Activated CD4-positive, alpha-beta T cell treated with anti-CD3 and anti-CD28 coated beads for 36 hours (primary cell): ENCODE measurements at regions of chr6 and their contacts with region 1.

Region 1: DNA sequence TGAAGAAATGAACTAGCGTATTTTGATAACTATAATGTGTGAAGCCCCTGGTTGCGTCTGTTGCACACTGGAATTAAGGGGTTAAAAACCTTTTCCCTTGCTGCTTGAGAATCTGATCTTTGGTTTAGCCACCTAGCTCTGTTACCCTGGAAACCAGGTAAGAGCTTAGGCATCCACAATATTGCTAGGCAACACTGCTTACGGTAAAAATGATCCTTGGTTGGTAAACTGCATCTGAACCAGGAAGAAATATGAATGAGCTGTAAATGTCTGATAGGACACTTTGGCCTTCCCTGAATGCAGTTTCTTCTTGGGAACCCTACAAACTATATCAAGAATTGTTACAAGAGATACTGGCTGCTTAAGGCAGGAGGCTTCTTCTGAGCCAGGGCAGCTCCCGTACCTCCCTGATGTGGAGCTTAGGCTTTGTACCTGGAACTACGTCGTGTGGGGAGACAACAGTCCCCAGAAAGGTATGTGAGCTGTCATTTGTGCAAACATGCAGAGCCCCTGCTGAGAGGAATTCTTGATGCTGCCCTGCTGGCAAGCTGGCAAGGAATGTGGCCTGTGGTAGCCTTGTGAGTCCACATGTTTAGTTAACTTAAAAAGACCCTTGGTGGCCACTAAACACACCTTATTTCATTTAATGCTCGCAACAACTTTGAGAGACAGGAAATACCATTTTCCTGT is 18.4 kb downstream of the UBE3D start:
- DNase-seq: no peak
- ATAC-seq: no peak
- H3K4me3 Mint-ChIP-seq: no peak overlapping the region
- H3K27ac Mint-ChIP-seq: no peak overlapping the region
- H3K4me1 Mint-ChIP-seq: no peaks in the 10 kb centered on the region
- H3K27me3 Mint-ChIP-seq: no peaks in the 10 kb centered on the region

Region 2: DNA sequence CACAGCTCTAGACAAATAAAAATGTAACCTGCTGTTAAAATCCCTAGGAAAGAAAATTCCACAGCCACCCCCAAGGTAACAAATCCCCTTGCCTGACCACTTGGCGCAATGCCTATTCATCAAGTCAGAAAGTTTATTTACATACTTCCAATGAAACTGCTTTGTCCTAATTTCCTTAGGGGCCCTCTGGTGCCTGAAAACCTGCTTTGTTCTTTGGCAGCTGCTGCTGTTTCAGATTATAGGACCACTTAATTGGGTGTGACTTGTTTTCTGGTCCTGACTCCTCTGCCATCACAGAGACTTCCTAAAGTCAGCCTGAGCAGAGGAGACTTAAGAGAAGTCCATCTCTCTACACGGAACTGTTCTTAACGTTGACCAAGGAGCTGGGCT is 305.2 kb before region 1 on chr6:
- CTCF ChIA-PET with region 1: no interaction called
- POLR2A ChIA-PET with region 1: no interaction called
- intact Hi-C with region 1: loop called in 1 of 2 experiments (anchors 10 kb)
- DNase-seq: no peak
- ATAC-seq: no peak
- H3K4me3 Mint-ChIP-seq: no peak overlapping the region
- H3K27ac Mint-ChIP-seq: no peak overlapping the region
- H3K4me1 Mint-ChIP-seq: no peaks in the 10 kb centered on the region
- H3K27me3 Mint-ChIP-seq: no peaks in the 10 kb centered on the region

Region 3: DNA sequence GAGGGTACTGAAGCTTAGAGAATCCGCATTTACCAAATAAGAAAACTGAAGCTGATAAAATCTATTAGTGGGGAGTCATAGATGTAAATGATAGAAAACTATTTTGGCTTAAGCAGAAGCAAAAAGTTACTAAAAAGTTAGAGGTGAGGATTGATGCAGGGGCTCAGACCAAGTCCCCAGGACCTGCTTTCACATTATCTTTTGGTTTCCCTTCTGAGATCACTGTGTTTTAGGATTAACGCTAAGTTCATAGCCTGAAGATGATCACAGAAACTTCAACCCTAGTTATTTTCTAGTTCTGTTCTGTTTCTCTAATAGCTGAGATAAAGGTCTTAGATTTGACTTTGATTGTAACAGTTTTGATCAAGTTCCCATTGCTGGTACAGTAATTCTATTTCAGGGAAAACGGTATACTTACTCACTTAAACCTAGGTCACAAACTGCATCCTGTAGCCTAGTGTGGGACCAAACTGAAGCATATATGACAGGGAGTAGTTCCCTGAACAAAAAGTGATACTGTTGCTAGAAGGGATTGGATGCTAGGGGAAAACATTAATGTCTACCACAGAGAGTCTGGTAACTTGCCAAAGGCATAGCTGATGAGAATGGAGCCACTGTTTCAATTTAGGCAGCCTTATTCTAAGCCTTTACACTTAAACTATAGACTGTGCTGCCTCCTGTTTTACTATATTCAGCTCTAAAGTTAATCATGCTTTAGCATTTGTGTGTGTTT is 825.3 kb after region 1 on chr6:
- CTCF ChIA-PET with region 1: no interaction called
- POLR2A ChIA-PET with region 1: no interaction called
- intact Hi-C with region 1: no loop called
- DNase-seq: no peak
- ATAC-seq: peak; percentile 64
- H3K4me3 Mint-ChIP-seq: no peak overlapping the region
- H3K27ac Mint-ChIP-seq: no peak overlapping the region
- H3K4me1 Mint-ChIP-seq: peaks cover 25% of the 10 kb centered on the region
- H3K27me3 Mint-ChIP-seq: no peaks in the 10 kb centered on the region

Region 4: DNA sequence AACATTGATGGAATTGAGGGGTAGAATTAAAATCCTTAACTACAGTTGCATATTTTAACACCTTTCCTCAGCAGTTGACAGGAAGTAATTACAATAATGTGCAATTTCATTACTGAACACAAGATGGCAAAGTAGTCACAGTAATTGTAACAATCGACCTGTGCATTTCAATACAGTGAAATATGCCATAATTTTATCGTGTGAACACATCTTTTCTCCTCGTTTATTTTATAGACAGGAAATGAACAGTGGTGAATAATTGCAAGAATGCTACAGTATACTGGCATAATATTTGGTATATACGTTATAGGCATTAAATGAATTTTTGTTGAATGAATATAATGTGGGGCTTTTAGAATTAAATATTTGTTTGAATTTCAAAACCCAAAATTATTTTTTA is 837.3 kb after region 1 on chr6:
- CTCF ChIA-PET with region 1: no interaction called
- POLR2A ChIA-PET with region 1: no interaction called
- intact Hi-C with region 1: no loop called
- DNase-seq: no peak
- ATAC-seq: peak; percentile 74
- H3K4me3 Mint-ChIP-seq: no peak overlapping the region
- H3K27ac Mint-ChIP-seq: no peak overlapping the region
- H3K4me1 Mint-ChIP-seq: peaks cover 11% of the 10 kb centered on the region
- H3K27me3 Mint-ChIP-seq: no peaks in the 10 kb centered on the region

Region 5: DNA sequence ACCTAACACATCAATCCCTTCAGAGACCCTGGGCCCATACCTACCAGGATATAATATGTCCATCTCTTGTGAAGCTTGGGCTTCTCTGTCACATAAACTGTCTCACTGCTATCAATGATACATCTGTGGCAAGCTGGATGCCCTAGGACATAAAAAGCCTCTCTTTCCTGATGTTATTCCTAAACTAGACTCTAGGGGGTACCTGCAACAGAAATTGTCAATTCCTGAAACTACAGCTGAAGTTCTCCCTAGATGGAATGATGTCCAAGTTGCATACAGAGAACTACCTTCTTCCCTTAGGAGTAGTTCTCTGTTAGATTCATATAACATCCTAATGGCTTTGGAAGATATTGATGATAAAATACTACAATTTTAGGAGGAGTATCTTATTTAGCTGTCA is 1681.4 kb after region 1 on chr6:
- CTCF ChIA-PET with region 1: no interaction called
- POLR2A ChIA-PET with region 1: no interaction called
- intact Hi-C with region 1: no loop called
- DNase-seq: no peak
- ATAC-seq: no peak
- H3K4me3 Mint-ChIP-seq: no peak overlapping the region
- H3K27ac Mint-ChIP-seq: no peak overlapping the region
- H3K4me1 Mint-ChIP-seq: no peaks in the 10 kb centered on the region
- H3K27me3 Mint-ChIP-seq: no peaks in the 10 kb centered on the region